ENCODE measurements at regions of chr12 and their contacts with region 1.

Region 1: GRCh38 chr12:109586385-109587296 is 13.0 kb downstream of the MVK start:
- DNase-seq: no peak
- ATAC-seq: no peak

Region 2: DNA sequence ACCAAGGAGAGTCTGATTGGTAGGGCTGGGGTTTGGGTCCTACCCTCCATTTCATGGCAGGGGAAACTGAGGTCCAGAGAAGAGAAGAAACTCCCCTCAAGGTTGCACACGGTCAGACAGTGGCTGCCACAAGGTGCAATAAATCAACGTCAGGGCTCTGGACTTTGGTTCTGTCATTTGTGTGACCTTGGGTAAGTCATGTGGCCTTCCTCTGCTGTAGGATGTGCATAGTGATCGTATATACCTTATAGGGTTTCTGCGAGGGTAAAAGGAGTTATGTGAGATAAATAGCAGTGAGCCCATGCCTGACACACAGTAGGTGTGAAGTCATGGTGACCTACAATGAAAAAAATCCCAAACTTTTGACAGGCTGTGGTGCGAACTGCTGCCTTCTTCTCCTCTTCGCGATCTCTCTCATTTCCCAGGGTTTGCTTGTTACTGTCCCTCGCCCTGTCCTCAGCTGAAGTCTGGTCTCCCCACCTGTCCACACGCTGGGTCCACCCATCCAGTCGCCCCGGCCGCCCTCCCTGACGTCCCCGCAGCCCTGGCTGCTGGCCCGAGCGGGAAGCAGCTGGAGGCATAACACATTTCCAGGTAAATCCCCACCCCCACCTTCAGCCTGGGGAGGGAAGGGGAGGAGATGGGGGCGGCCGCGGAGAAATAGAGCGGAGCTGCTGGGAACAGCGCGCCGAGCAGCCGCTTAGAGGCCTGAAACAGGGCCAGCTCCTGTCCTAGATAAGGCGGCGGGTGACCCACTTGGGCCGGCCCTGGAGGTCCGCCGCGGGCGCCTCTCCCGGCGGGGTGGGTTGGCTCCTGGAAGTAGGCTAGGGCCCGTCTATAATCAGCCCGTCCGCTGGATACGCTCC is 125.2 kb after region 1 on chr12:
- intact Hi-C with region 1: loop called (anchors 1 kb)
- DNase-seq: no peak
- ATAC-seq: no peak

Region 3: GRCh38 chr12:110600254-110600653 is 1013.6 kb after region 1 on chr12:
- intact Hi-C with region 1: no loop called
- DNase-seq: no peak
- ATAC-seq: peak; percentile 61